Activated B cell treated with CpG ODN at 0.5 μM for 24 hours (primary cell): ENCODE measurements at regions of chr1 and their contacts with region 1.

Region 1: GRCh38 chr1:110696818-110697217 is 22.1 kb upstream of the KCNA3 start:
- DNase-seq: no peak
- ATAC-seq: no peak
- H3K4me3 Mint-ChIP-seq: no peak overlapping the region
- H3K27ac Mint-ChIP-seq: no peak overlapping the region
- H3K4me1 Mint-ChIP-seq: peaks cover 6% of the 10 kb centered on the region
- H3K27me3 Mint-ChIP-seq: peaks cover under 1% of the 10 kb centered on the region
- CTCF ChIP-seq: no peak

Region 2: GRCh38 chr1:110734133-110734680 is 37.4 kb after region 1 on chr1:
- CTCF ChIA-PET with region 1: no interaction called
- POLR2A ChIA-PET with region 1: no interaction called
- intact Hi-C with region 1: loop called (anchors 5 kb)
- DNase-seq: no peak
- ATAC-seq: no peak
- H3K4me3 Mint-ChIP-seq: no peak overlapping the region
- H3K27ac Mint-ChIP-seq: no peak overlapping the region
- H3K4me1 Mint-ChIP-seq: no peaks in the 10 kb centered on the region
- H3K27me3 Mint-ChIP-seq: peaks cover 23% of the 10 kb centered on the region
- CTCF ChIP-seq: no peak